CD8-positive, alpha-beta T cell (primary cell): ENCODE measurements at regions of chr1 and their contacts with region 1.

Region 1: DNA sequence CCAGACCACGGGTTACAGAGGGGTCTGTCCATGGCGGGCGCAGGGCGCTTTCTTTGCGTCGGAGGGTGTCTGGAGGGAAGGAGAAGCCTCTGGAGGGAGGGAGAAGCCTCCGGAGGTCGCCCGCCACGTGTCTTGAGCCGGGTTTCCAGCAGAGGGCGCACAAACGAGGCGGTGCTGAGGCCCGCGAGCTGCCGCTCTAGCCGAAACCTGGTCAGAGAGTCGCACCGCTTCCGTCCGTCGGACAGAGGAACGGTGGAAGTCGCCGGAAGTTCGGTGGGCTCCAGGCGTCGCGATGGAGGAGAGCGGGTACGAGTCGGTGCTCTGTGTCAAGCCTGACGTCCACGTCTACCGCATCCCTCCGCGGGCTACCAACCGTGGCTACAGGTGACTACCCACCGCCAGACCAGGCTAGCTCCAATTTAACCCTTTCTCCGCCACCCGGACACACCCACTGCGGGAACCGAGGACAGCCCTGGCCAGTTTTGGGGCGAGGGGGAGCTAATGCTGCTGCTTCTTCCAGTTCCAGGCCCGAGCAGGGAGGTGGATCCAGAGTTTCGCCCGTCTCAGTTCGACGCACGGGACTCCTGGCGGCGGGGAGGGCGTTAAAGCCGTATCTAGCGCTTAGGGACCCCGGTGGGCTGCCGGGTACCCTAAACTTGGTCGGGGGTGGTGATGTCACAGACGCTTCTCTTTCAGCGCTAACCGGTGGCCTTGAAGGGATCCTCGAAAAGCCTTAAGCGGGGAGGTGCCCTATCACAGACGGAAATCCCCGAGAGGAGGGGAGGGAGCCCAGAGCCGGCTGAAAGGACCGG is at the start of gene NECAP2:
- DNase-seq: peak; percentile 90 to 98 (median 94)
- ATAC-seq: peak; percentile 80
- H3K4me3 ChIP-seq: peak within 1 kb of the TSS; percentile 82 to 100
- H3K4me3 Mint-ChIP-seq: peak within 1 kb of the TSS; percentile 88
- H3K27ac ChIP-seq: peak within 1 kb of the TSS; percentile 89 to 100
- H3K27ac Mint-ChIP-seq: peak within 1 kb of the TSS; percentile 94
- H3K4me1 ChIP-seq: peaks cover 29% of the 10 kb centered on the region
- H3K4me1 Mint-ChIP-seq: peaks cover 35% of the 10 kb centered on the region
- H3K27me3 ChIP-seq: no peaks in the 10 kb centered on the region
- H3K27me3 Mint-ChIP-seq: no peaks in the 10 kb centered on the region
- CTCF ChIP-seq: peak; percentile 85
- total RNA-seq, gene NECAP2: 52.1 to 53.7 TPM

Region 2: DNA sequence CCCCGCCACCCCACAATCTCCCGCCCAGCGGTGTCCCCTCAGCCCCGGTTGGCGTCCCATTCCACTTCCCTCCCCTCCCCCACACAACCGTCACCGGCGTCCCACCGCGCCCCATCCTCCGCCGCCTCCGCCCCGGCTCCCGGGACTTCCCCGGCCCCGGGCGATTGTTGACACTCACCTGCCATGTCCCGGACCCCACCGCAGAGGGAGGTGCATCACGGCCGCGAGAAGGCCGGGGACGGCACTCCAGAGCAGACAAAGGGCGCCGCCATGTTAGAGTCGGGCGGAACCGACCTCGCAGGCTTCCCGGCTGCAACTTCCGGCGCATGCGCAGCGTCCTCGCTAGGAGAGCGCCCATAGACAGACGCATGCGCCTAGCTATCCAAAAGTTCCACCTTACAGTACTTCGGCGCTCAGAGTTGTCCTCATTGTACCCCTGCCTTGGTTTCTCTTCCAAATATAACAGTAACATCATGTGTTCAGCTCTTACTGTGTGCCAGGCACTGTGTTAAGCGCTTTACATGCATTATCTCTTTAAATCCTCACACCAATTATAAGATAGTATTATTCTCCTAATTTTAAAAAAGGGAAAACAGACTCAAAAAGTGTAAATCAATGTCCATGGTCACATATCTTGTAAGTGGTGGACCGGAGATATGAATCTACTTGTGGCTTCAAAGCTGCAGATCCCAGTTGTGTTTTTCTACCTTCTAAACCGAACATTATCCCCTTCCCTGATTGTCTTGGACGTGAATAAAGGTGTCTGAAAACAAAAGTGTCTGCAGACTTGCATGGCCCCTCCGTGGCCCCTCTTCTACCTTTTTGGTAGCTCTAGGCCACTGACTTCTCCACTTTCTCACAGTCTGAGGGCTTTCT is 464.6 kb before region 1 on chr1 and contains the start of gene ZBTB17:
- CTCF ChIA-PET with region 1: no interaction called
- POLR2A ChIA-PET with region 1: no interaction called
- intact Hi-C with region 1: loop called in 1 of 2 experiments (anchors 2 kb)
- DNase-seq: peak; percentile 90 to 98 (median 95)
- ATAC-seq: peak; percentile 88
- H3K4me3 ChIP-seq: peak within 1 kb of the TSS; percentile 89 to 93
- H3K4me3 Mint-ChIP-seq: peak within 1 kb of the TSS; percentile 90
- H3K27ac ChIP-seq: peak within 1 kb of the TSS; percentile 68 to 87
- H3K27ac Mint-ChIP-seq: peak within 1 kb of the TSS; percentile 94
- H3K4me1 ChIP-seq: peaks cover 11% of the 10 kb centered on the region
- H3K4me1 Mint-ChIP-seq: peaks cover 38% of the 10 kb centered on the region
- H3K27me3 ChIP-seq: no peaks in the 10 kb centered on the region
- H3K27me3 Mint-ChIP-seq: no peaks in the 10 kb centered on the region
- CTCF ChIP-seq: no peak
- total RNA-seq, gene ZBTB17: 106 to 115 TPM

Region 3: GRCh38 chr1:16351994-16352841 is 88.5 kb before region 1 on chr1 and contains the start of gene FBXO42:
- CTCF ChIA-PET with region 1: no interaction called
- POLR2A ChIA-PET with region 1: interaction called, 7 read pairs
- intact Hi-C with region 1: loop called (anchors 1 kb)
- DNase-seq: peak; percentile 82 to 97 (median 91)
- ATAC-seq: peak; percentile 90
- H3K4me3 ChIP-seq: peak within 1 kb of the TSS; percentile 59 to 89
- H3K4me3 Mint-ChIP-seq: peak within 1 kb of the TSS; percentile 92
- H3K27ac ChIP-seq: peak within 1 kb of the TSS; percentile 74 to 96
- H3K27ac Mint-ChIP-seq: peak within 1 kb of the TSS; percentile 93
- H3K4me1 ChIP-seq: peaks cover 22% of the 10 kb centered on the region
- H3K4me1 Mint-ChIP-seq: peaks cover 33% of the 10 kb centered on the region
- H3K27me3 ChIP-seq: no peaks in the 10 kb centered on the region
- H3K27me3 Mint-ChIP-seq: no peaks in the 10 kb centered on the region
- CTCF ChIP-seq: peak; percentile 37
- total RNA-seq, gene FBXO42: 18.0 to 18.2 TPM

Region 4: DNA sequence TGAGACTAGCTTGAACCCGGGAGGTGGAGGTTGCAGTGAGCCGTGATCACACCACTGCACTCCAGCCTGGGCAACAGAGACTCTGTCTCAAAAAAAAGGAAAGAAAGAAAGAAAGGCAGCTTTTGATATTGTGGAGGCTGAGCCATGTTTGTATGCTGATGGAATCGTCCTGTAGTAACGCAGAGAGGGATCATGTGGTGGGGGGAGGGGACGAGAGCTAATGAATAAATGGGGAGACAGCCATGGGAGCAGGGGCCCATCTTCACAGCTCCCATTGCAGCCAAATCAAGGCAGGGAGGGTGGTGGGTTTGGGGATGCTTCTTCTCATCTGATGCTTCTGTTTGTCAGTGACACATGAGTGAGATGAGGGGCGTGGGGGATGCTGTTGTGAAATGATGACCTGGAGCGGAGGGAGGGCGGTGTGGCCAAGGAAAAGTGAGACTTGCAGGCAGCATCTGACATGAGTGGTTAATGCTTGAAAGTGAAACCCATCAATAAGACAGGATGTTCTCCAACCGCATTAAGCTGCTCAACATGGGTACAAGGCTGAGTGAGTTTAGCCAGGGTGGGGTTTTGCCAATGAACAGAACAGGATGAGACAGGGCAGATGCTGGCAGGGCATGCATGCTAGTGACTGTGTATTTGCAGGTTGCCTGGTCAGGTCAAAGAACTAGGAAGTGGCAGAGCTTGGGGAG is 20.1 kb before region 1 on chr1:
- CTCF ChIA-PET with region 1: interaction called, 23 read pairs
- POLR2A ChIA-PET with region 1: interaction called, 14 read pairs
- intact Hi-C with region 1: loop called in 1 of 2 experiments (anchors 1 kb)
- DNase-seq: peak; percentile 8 to 82 (median 53)
- ATAC-seq: peak; percentile 94
- H3K4me3 ChIP-seq: peak overlapping the region in 1 of 2 experiments; percentile 6
- H3K4me3 Mint-ChIP-seq: peak overlapping the region; percentile 64
- H3K27ac ChIP-seq: peak overlapping the region; percentile 19 to 56
- H3K27ac Mint-ChIP-seq: peak overlapping the region; percentile 90
- H3K4me1 ChIP-seq: peaks cover 26% of the 10 kb centered on the region
- H3K4me1 Mint-ChIP-seq: peaks cover 30% of the 10 kb centered on the region
- H3K27me3 ChIP-seq: no peaks in the 10 kb centered on the region
- H3K27me3 Mint-ChIP-seq: no peaks in the 10 kb centered on the region
- CTCF ChIP-seq: no peak

Region 5: DNA sequence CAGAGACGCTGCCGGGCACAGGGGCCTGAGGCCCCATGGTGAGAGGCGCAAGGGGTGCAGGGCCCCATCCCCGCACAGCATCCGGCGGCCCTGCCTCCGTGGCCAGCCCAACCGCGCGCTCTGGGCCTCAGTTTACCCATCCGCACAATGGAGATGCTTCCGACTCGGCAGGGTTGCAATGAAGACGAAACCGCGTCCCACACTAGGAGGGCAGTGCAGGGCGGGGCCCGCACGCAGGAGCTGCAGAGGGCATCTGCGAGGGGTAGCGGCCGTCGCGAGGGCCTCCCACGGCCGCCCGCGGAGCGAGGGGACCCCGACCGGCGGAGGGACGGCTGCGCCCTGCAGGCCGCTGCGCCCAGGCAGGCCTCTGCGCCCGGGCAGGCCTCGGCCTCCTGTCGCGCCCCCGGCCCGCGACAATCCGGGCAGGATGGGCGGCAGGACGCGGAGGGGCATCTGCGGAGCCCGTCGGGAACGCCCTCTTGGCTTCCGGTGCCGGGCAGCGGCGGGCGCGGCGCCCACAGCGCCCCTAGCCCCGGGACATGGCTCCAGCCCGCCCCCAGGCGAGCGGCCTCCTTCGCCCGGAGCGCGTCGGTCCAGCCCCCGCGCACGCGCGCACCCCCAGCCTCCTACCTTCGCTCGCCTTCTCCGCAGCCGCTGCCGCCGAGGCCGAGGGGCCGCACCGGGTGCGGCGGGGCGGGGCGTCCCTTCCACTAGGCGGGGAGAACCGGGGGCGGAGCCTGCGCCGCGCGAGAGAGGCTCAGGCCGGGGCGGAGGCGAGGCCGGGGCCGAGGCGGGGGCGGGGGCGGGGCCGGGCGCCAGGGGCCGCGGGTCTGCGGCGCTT is 58.1 kb after region 1 on chr1:
- CTCF ChIA-PET with region 1: interaction called, 9 read pairs
- POLR2A ChIA-PET with region 1: interaction called, 7 read pairs
- intact Hi-C with region 1: loop called (anchors 1 to 2 kb)
- DNase-seq: peak; percentile 62 to 91 (median 85)
- ATAC-seq: peak; percentile 90
- H3K4me3 ChIP-seq: peak overlapping the region; percentile 58 to 92
- H3K4me3 Mint-ChIP-seq: peak overlapping the region; percentile 92
- H3K27ac ChIP-seq: peak overlapping the region; percentile 37 to 66
- H3K27ac Mint-ChIP-seq: no peak overlapping the region
- H3K4me1 ChIP-seq: peaks cover 10% of the 10 kb centered on the region
- H3K4me1 Mint-ChIP-seq: peaks cover 20% of the 10 kb centered on the region
- H3K27me3 ChIP-seq: no peaks in the 10 kb centered on the region
- H3K27me3 Mint-ChIP-seq: no peaks in the 10 kb centered on the region
- CTCF ChIP-seq: no peak

Region 6: DNA sequence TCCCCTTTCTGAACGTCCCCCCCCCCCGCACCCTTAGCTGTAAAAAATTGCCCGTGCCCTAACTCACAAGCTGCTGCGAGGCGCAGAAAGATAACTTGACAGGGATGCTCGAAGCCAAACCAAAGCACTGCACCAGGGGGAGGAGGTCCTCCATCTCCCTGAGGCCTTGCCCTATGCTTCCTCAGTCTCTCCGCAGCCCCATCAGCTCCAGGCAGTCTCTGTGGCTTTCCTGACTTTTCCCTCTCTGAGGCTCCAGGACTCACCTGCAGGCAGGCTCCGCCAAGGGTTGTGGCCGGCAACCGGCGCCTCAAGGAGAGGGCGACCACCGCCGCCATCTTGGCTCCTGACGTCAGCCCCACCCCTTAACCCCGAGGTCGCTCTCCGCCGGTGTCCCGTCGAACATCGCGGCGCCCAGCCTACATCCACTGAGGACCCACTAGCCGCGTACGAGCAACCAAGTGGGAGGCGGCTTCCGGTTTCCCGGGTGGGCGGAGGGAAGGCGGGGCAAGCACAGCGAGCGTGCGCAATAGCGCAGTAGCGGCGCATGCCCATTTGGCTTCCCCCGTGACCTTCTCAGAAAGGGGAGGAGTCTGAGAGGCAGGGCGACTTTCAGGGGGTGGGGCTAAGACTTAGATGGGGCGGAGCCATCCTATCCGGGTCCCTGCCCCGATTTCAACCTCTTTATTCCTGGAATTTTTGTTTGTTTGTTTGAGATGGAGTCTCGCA is 613.2 kb after region 1 on chr1 and contains the start of gene SDHB:
- CTCF ChIA-PET with region 1: no interaction called
- POLR2A ChIA-PET with region 1: no interaction called
- intact Hi-C with region 1: loop called in 1 of 2 experiments (anchors 5 kb)
- DNase-seq: peak; percentile 97 to 100 (median 99)
- ATAC-seq: peak; percentile 98
- H3K4me3 ChIP-seq: peak within 1 kb of the TSS; percentile 53 to 90
- H3K4me3 Mint-ChIP-seq: peak within 1 kb of the TSS; percentile 99
- H3K27ac ChIP-seq: peak within 1 kb of the TSS; percentile 67 to 84
- H3K27ac Mint-ChIP-seq: peak within 1 kb of the TSS; percentile 98
- H3K4me1 ChIP-seq: peaks cover 16% of the 10 kb centered on the region
- H3K4me1 Mint-ChIP-seq: peaks cover 33% of the 10 kb centered on the region
- H3K27me3 ChIP-seq: no peaks in the 10 kb centered on the region
- H3K27me3 Mint-ChIP-seq: peaks cover 6% of the 10 kb centered on the region
- CTCF ChIP-seq: no peak
- total RNA-seq, gene SDHB: 66.2 to 71.8 TPM